ENCODE measurements at regions of chr2 and their contacts with region 1.

Region 1: GRCh38 chr2:188773075-188773474 is 201.1 kb upstream of the COL3A1 start:
- DNase-seq: peak; percentile 79
- ATAC-seq: peak; percentile 75
- H3K4me3 ChIP-seq: no peak overlapping the region
- H3K27ac ChIP-seq: no peak overlapping the region
- H3K4me1 ChIP-seq: peaks cover 2% of the 10 kb centered on the region; the same call in 1 of the 2 replicates
- H3K27me3 ChIP-seq: no peaks in the 10 kb centered on the region
- CTCF ChIP-seq: no peak
- POLR2A ChIP-seq: no peak
- RAD21 ChIP-seq: no peak

Region 2: DNA sequence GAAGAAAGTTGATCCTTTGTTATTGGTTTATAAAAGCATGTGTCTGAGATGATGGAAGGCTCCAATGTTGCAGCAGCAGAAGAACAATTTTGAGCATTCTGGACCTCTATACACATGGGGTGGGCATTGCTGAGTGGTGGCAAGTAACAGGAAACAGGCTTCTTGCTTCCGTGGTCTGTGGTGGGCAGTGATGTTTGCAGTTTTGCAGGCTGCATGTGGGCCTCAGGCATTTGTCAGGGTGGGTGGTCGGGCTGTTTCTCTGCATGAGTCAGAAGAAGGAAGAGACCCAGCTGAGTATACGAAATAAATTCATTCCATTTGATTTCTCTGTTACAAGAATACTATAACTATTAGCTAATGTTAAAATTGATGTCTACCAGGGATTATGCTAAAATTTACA is 38.4 kb before region 1 on chr2:
- CTCF ChIA-PET with region 1: no interaction called
- POLR2A ChIA-PET with region 1: no interaction called
- dilution Hi-C with region 1: no loop called
- in situ Hi-C with region 1: no loop called
- intact Hi-C with region 1: loop called (anchors 5 kb)
- DNase-seq: peak; percentile 33
- ATAC-seq: peak; percentile 24; the same call in 1 of the 2 replicates
- H3K4me3 ChIP-seq: no peak overlapping the region
- H3K27ac ChIP-seq: no peak overlapping the region
- H3K4me1 ChIP-seq: no peaks in the 10 kb centered on the region
- H3K27me3 ChIP-seq: no peaks in the 10 kb centered on the region
- CTCF ChIP-seq: no peak
- POLR2A ChIP-seq: no peak
- RAD21 ChIP-seq: no peak